ENCODE measurements at regions of chr4 and their contacts with region 1.

Region 1: DNA sequence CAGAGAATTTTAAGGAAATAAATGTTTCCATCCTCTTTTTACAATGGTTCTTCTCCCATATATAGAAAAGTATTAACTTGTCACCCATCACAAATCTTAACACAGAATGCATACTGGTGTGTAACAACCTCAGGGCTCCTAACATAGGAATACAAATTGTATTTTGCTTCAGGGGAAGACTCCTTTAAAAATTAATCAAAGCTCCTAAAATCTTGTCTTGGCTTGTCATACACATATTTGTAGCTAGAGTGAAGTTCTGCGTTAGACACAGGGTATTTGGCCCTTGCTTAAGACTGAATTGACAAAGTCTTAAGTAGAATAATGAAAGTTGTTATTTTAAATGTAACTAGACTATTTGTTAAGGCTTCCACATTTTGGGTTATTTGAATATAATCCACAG is 6.4 kb downstream of the ASIC5 start:
- DNase-seq: no peak
- H3K4me3 ChIP-seq: no peak overlapping the region
- H3K27ac ChIP-seq: no peak overlapping the region
- H3K4me1 ChIP-seq: no peaks in the 10 kb centered on the region
- H3K27me3 ChIP-seq: no peaks in the 10 kb centered on the region
- CTCF ChIP-seq: no peak

Region 2: GRCh38 chr4:155509555-155509954 is 350.2 kb before region 1 on chr4:
- CTCF ChIA-PET with region 1: no interaction called
- POLR2A ChIA-PET with region 1: no interaction called
- intact Hi-C with region 1: no loop called
- DNase-seq: peak; percentile 7
- H3K4me3 ChIP-seq: no peak overlapping the region
- H3K27ac ChIP-seq: no peak overlapping the region
- H3K4me1 ChIP-seq: no peaks in the 10 kb centered on the region
- H3K27me3 ChIP-seq: no peaks in the 10 kb centered on the region
- CTCF ChIP-seq: no peak

Region 3: GRCh38 chr4:155722816-155723499 is 136.8 kb before region 1 on chr4:
- CTCF ChIA-PET with region 1: no interaction called
- POLR2A ChIA-PET with region 1: no interaction called
- intact Hi-C with region 1: no loop called
- DNase-seq: peak; percentile 1
- H3K4me3 ChIP-seq: no peak overlapping the region
- H3K27ac ChIP-seq: no peak overlapping the region
- H3K4me1 ChIP-seq: no peaks in the 10 kb centered on the region
- H3K27me3 ChIP-seq: no peaks in the 10 kb centered on the region
- CTCF ChIP-seq: no peak

Region 4: GRCh38 chr4:157787618-157788017 is 1927.9 kb after region 1 on chr4:
- CTCF ChIA-PET with region 1: no interaction called
- POLR2A ChIA-PET with region 1: no interaction called
- intact Hi-C with region 1: loop called (anchors 5 kb)
- DNase-seq: no peak
- H3K4me3 ChIP-seq: no peak overlapping the region
- H3K27ac ChIP-seq: no peak overlapping the region
- H3K4me1 ChIP-seq: no peaks in the 10 kb centered on the region
- H3K27me3 ChIP-seq: no peaks in the 10 kb centered on the region
- CTCF ChIP-seq: no peak

Measured in A673 (cell line).